ENCODE measurements at regions of chr19 and their contacts with region 1.

Region 1: GRCh38 chr19:46426506-46427162 is 2.1 kb downstream of the PNMA8C start:
- DNase-seq: peak; percentile 56 to 98 (median 82)

Region 2: GRCh38 chr19:46471116-46471733 is 44.6 kb after region 1 on chr19 and contains the start of gene PNMA8A:
- intact Hi-C with region 1: loop called (anchors 5 kb)
- DNase-seq: peak; percentile 66 to 97 (median 84)

Region 3: GRCh38 chr19:46487802-46488445 is 61.3 kb after region 1 on chr19:
- intact Hi-C with region 1: no loop called
- DNase-seq: peak; percentile 70 to 97 (median 86)